ENCODE measurements at regions of chr18 and their contacts with region 1.

Region 1: GRCh38 chr18:53544917-53545316 is 679.6 kb downstream of the MBD2 start:
- DNase-seq: no peak
- ATAC-seq: no peak

Region 2: GRCh38 chr18:54261894-54262293 is 717.0 kb after region 1 on chr18:
- intact Hi-C with region 1: loop called (anchors 5 kb)
- DNase-seq: no peak
- ATAC-seq: peak; percentile 59